Ascending aorta (tissue), 2 donors: ENCODE measurements at regions of chr10 and their contacts with region 1.

Region 1: DNA sequence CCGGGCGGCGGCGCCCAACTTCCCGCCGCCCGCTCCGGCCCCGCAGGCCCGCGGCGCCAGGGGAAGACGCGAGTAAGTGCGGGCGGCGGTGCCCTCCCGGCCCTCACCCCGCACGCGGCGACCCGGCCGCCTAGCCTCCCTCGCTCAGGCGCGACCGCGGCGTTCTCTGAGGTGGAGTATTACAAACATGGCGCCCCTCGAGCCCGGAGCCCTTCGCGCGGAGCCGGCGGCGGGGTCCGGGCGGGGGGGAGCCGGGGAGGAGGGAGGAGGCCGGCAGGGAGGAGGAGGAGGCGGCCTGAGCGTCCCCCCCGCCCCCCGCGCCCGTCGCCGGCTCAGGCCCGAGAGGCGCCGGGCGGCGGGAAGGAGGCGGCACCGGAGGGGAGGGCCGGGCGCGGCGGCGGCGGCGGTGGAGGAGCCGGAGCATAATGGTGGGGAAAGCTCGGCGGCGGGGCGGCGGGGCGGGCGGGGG is at the start of gene ZMYND11:
- DNase-seq: peak in 1 of 2 donors; percentile 84
- H3K4me3 ChIP-seq: peak within 1 kb of the TSS; percentile 88 to 97
- H3K27ac ChIP-seq: peak within 1 kb of the TSS; percentile 86 to 99
- H3K4me1 ChIP-seq: peaks cover 3 to 22% of the 10 kb centered on the region in 2 donors
- H3K27me3 ChIP-seq: no peaks in the 10 kb centered on the region
- CTCF ChIP-seq: no peak
- total RNA-seq, gene ZMYND11: 29.6 TPM

Region 2: GRCh38 chr10:689433-690371 is 554.5 kb after region 1 on chr10 and contains the start of gene DIP2C:
- intact Hi-C with region 1: loop called (anchors 5 kb)
- DNase-seq: peak in 1 of 2 donors; percentile 83
- H3K4me3 ChIP-seq: peak within 1 kb of the TSS; percentile 67 to 89
- H3K27ac ChIP-seq: peak within 1 kb of the TSS; percentile 89 to 91
- H3K4me1 ChIP-seq: peaks cover 6 to 11% of the 10 kb centered on the region in 2 donors
- H3K27me3 ChIP-seq: no peaks in the 10 kb centered on the region
- CTCF ChIP-seq: no peak
- total RNA-seq, gene DIP2C: 14.7 TPM